ENCODE measurements at regions of chr2 and their contacts with region 1.

Region 1: GRCh38 chr2:105337124-105338019 is at the start of gene C2orf49:
- DNase-seq: peak; percentile 81 to 94 (median 92)
- ATAC-seq: peak; percentile 94
- H3K4me3 ChIP-seq: peak within 1 kb of the TSS; percentile 83
- H3K4me3 Mint-ChIP-seq: peak within 1 kb of the TSS; percentile 89 to 100 (median 98)
- H3K27ac ChIP-seq: peak within 1 kb of the TSS; percentile 99
- H3K27ac Mint-ChIP-seq: peak within 1 kb of the TSS; percentile 99 to 100 (median 100)
- H3K4me1 ChIP-seq: peaks cover 18 to 22% of the 10 kb centered on the region in 2 donors
- H3K4me1 Mint-ChIP-seq: peaks cover 20 to 44% (median 42%) of the 10 kb centered on the region in 7 donors
- H3K27me3 ChIP-seq: no peaks in the 10 kb centered on the region
- H3K27me3 Mint-ChIP-seq: no peaks in the 10 kb centered on the region
- total RNA-seq, gene C2orf49: 17.5 to 30.8 (median 23.4) TPM

Region 2: GRCh38 chr2:104952976-104953375 is 384.4 kb before region 1 on chr2:
- CTCF ChIA-PET with region 1: no interaction called
- POLR2A ChIA-PET with region 1: no interaction called
- intact Hi-C with region 1: no loop called
- DNase-seq: no peak
- ATAC-seq: no peak
- H3K4me3 ChIP-seq: no peak overlapping the region
- H3K4me3 Mint-ChIP-seq: no peak overlapping the region
- H3K27ac ChIP-seq: no peak overlapping the region
- H3K27ac Mint-ChIP-seq: no peak overlapping the region
- H3K4me1 ChIP-seq: no peaks in the 10 kb centered on the region
- H3K4me1 Mint-ChIP-seq: no peaks in the 10 kb centered on the region
- H3K27me3 ChIP-seq: no peaks in the 10 kb centered on the region
- H3K27me3 Mint-ChIP-seq: peaks cover 2 to 19% (median 13%) of the 10 kb centered on the region in 5 donors

Region 3: GRCh38 chr2:105037572-105038382 is 299.6 kb before region 1 on chr2 and contains the start of gene MRPS9:
- CTCF ChIA-PET with region 1: no interaction called
- POLR2A ChIA-PET with region 1: no interaction called
- intact Hi-C with region 1: loop called (anchors 1 kb)
- DNase-seq: peak; percentile 94 to 97 (median 95)
- ATAC-seq: peak; percentile 99
- H3K4me3 ChIP-seq: peak within 1 kb of the TSS; percentile 65
- H3K4me3 Mint-ChIP-seq: peak within 1 kb of the TSS; percentile 89 to 100 (median 99)
- H3K27ac ChIP-seq: peak within 1 kb of the TSS; percentile 85
- H3K27ac Mint-ChIP-seq: peak within 1 kb of the TSS; percentile 84 to 98 (median 94)
- H3K4me1 ChIP-seq: peaks cover 4 to 12% of the 10 kb centered on the region in 2 donors
- H3K4me1 Mint-ChIP-seq: peaks cover 23 to 66% (median 42%) of the 10 kb centered on the region in 7 donors
- H3K27me3 ChIP-seq: no peaks in the 10 kb centered on the region
- H3K27me3 Mint-ChIP-seq: no peaks in the 10 kb centered on the region
- total RNA-seq, gene MRPS9: 12.5 to 23.6 (median 21.3) TPM

Region 4: DNA sequence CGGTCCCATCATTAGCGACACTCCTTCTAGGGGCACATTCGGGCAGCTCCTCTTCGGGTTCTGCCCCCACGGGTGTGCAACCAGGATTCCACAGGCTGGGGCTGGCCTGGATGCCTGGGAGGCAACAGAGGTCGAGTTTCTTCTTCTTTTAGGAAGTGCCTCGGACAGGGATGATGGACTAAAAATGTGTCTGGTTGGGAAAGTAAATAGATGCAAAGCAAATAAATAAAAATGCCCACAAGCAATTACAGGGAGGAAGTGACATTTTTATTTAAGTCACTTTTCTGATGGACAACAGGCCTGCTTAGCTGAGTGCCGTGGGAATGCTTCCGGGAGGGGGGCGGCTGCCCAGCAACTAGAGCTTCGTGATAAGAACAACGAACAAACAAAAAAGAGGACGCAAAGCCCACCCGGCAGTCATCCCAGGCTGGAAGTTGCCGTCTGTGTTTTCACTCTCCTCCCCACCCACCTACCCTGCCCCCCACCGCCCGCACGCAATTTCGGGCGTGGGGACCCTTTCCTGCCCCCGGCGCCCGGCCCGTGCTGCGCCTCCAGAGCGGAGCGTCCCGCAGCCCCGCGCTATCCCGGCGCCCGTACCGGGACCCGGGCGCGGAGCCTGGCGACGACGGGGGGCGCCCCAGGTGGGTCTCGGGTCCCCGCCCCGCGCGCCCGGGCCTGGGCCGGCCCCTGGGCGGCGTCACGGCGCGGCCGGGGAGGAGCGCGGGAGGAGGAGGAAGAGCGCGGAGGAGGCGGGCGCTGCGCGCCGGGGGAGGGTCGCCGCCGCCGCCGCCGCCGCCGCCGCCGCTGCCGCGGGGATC is 406.9 kb after region 1 on chr2:
- CTCF ChIA-PET with region 1: no interaction called
- POLR2A ChIA-PET with region 1: no interaction called
- intact Hi-C with region 1: loop called in 1 of 2 experiments (anchors 10 kb)
- DNase-seq: peak; percentile 57 to 79 (median 69)
- ATAC-seq: peak; percentile 87
- H3K4me3 ChIP-seq: peak overlapping the region; percentile 24
- H3K4me3 Mint-ChIP-seq: peak overlapping the region; percentile 76 to 96 (median 90)
- H3K27ac ChIP-seq: peak overlapping the region; percentile 80
- H3K27ac Mint-ChIP-seq: peak overlapping the region; percentile 90 to 96 (median 95)
- H3K4me1 ChIP-seq: peaks cover 48 to 54% of the 10 kb centered on the region in 2 donors
- H3K4me1 Mint-ChIP-seq: peaks cover 49 to 82% (median 77%) of the 10 kb centered on the region in 7 donors
- H3K27me3 ChIP-seq: no peaks in the 10 kb centered on the region
- H3K27me3 Mint-ChIP-seq: no peaks in the 10 kb centered on the region

Region 5: GRCh38 chr2:105749583-105750400 is 412.4 kb after region 1 on chr2:
- CTCF ChIA-PET with region 1: no interaction called
- POLR2A ChIA-PET with region 1: no interaction called
- intact Hi-C with region 1: loop called (anchors 10 kb)
- DNase-seq: no peak
- ATAC-seq: peak; percentile 5
- H3K4me3 ChIP-seq: peak overlapping the region; percentile 94
- H3K4me3 Mint-ChIP-seq: peak overlapping the region; percentile 71 to 99 (median 93)
- H3K27ac ChIP-seq: peak overlapping the region; percentile 89
- H3K27ac Mint-ChIP-seq: peak overlapping the region; percentile 92 to 99 (median 97)
- H3K4me1 ChIP-seq: peaks cover 67 to 74% of the 10 kb centered on the region in 2 donors
- H3K4me1 Mint-ChIP-seq: peaks cover 53 to 85% (median 81%) of the 10 kb centered on the region in 7 donors
- H3K27me3 ChIP-seq: no peaks in the 10 kb centered on the region
- H3K27me3 Mint-ChIP-seq: no peaks in the 10 kb centered on the region